Left ventricle myocardium inferior (tissue), 1 donor: ENCODE measurements at regions of chr3 and their contacts with region 1.

Region 1: DNA sequence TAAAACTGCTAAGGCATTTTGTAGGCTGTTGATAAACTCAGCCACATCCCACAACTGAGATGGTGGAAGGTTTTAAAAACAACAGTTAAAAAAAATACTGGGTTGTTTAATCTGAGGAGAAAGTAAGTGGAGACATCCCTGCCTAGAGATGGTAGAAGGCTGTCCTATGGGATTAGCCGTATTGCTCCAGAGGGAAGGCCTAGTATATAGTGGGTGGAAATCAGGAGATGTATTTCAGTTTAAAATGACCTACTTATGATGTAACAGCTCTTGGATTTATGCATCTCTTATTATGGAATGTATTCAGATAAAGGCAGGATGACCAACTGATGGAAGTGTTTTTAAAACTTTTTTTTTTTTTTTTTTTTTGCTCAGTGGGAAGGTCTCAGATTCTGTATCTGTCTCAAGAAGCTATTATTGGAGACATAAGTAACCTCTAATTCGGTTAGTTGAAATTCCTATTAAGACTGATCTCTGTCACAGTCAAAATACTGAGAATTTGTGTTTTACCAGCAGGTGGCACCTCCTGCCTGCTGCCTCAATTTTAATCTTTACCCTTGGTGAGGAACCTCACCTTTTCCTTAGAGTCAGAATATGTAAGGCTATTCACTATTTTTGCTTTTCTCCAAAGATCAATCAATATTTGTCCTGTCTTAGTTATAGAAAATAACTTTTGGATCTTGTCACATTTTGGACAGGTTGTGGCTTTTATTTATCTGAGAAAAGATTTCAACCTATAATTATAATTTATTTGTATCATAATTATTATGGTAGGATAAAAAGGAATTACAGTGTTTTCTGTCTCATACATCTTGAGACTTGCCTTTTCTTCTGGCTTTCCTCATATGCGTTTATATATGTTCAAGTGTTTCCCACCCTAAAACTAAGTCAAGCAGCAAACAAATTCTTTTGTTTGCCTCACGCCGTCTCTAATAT is 63.0 kb downstream of the VPS8 start:
- DNase-seq: no peak
- H3K4me3 ChIP-seq: no peak overlapping the region
- H3K27ac ChIP-seq: no peak overlapping the region
- H3K4me1 ChIP-seq: peaks cover 9% of the 10 kb centered on the region
- H3K27me3 ChIP-seq: no peaks in the 10 kb centered on the region
- CTCF ChIP-seq: peak; percentile 73

Region 2: DNA sequence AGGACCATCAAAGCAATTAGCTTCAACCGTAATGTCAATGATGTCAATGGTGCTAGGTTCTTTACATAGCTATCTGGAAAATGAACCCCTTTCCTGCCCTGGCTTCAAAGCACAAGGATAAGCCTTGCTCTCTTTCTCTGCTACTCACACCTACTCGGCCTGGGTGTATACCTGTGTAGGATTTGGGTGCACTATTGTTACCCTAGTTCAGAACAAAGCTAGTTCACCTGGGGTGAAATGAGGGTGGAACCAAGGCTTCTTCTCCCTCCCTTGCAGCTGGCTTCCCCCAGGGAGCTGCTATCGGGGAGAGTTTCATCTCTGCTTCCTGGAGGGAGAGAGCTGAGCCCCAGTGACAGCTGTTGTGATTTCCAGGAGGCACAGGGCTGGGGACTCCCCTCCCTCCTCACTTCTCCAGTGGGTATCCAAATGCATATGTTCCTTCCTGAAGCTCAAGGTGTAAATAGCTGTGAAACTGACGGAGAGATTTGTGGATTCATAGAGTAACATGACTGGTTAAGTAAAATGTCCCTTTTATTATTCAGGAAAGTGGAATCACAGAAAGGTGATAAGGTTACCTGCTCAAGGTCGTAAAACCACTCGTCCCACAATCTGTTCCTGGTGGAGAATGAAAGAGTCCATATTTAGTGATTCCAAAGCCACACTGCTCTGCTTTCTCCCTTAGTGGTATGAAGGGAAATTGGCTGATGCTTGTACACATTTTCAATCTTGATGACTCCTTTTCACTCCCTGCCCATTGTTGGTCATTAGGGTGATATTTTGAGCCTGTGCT is 289.6 kb after region 1 on chr3:
- intact Hi-C with region 1: no loop called
- DNase-seq: no peak
- H3K4me3 ChIP-seq: no peak overlapping the region
- H3K27ac ChIP-seq: no peak overlapping the region
- H3K4me1 ChIP-seq: no peaks in the 10 kb centered on the region
- H3K27me3 ChIP-seq: peaks cover 25% of the 10 kb centered on the region
- CTCF ChIP-seq: no peak

Region 3: DNA sequence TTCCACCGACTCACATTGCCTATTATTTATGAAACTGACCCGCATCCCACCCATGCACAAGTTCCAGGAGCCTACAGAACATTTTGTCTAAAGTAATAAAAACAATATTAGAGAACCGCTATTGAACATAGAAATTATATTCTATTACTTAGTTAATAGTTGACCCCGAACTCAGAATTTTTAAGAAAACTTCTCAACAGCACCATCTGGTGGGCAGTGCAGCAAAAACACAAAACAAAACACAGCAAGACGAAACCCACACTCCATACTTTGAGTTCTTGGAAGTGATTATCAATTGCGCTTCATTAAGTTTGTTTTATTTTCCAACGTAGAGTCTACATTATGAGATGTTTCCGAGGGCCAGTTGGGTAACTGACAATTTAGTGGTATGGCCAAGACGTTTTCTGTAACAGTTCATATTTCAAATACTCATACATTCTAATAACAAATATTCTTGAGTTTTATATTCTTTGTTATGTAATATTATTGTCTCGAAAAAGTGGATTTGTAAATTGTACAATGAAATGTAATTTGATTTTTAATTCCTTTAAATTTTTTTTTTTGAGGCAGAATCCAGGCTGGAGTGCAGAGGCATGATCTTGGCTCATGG is 301.9 kb after region 1 on chr3:
- intact Hi-C with region 1: loop called (anchors 2 kb)
- DNase-seq: peak; percentile 20
- H3K4me3 ChIP-seq: no peak overlapping the region
- H3K27ac ChIP-seq: no peak overlapping the region
- H3K4me1 ChIP-seq: peaks cover 10% of the 10 kb centered on the region
- H3K27me3 ChIP-seq: peaks cover 35% of the 10 kb centered on the region
- CTCF ChIP-seq: peak; percentile 79